ENCODE measurements at regions of chr5 and their contacts with region 1.

Region 1: DNA sequence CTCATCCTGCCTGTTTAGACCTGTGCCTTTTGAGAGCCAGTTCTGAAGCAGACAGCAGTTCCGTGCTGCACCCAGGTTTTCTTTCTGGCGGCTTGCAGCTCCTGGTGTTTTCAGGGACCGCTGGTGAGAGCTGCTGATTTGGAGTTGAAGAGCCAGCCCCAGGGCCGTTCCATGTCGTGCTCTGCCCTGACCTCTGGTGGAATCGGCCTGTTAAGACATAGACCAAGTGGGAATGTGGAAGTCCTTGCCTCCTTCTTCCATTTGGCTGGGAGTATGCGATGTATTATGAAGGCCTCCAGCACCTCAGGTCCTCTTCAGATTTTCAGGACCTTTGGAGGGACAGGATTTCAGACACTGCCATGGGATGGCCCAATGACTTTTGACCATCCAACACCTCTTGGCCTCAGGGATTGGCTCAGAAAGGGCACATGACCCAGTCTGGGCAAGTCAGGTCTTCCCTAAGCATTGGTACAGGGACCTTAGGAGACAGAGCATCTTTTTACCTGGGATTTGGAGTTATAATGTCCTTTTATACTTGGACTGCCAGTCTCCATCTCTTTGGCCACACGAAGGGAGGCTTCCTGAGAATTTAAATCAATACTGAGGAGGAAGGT is 136.1 kb upstream of the CLINT1 start:
- DNase-seq: peak; percentile 75 to 80
- H3K4me3 ChIP-seq: no peak overlapping the region
- H3K4me3 Mint-ChIP-seq: peak overlapping the region; percentile 49
- H3K27ac Mint-ChIP-seq: no peak overlapping the region
- H3K4me1 ChIP-seq: no peaks in the 10 kb centered on the region
- H3K4me1 Mint-ChIP-seq: no peaks in the 10 kb centered on the region
- H3K27me3 ChIP-seq: no peaks in the 10 kb centered on the region
- H3K27me3 Mint-ChIP-seq: no peaks in the 10 kb centered on the region
- CTCF ChIP-seq: peak; percentile 75 to 93

Region 2: GRCh38 chr5:157761690-157762621 is 233.1 kb before region 1 on chr5:
- CTCF ChIA-PET with region 1: interaction called, 3 read pairs
- POLR2A ChIA-PET with region 1: no interaction called
- intact Hi-C with region 1: loop called (anchors 1 kb)
- DNase-seq: peak; percentile 44 to 53
- H3K4me3 ChIP-seq: no peak overlapping the region
- H3K4me3 Mint-ChIP-seq: no peak overlapping the region
- H3K27ac Mint-ChIP-seq: no peak overlapping the region
- H3K4me1 ChIP-seq: no peaks in the 10 kb centered on the region
- H3K4me1 Mint-ChIP-seq: no peaks in the 10 kb centered on the region
- H3K27me3 ChIP-seq: no peaks in the 10 kb centered on the region
- H3K27me3 Mint-ChIP-seq: no peaks in the 10 kb centered on the region
- CTCF ChIP-seq: peak; percentile 70 to 80

Region 3: GRCh38 chr5:157820593-157821252 is 174.3 kb before region 1 on chr5:
- CTCF ChIA-PET with region 1: interaction called, 4 read pairs
- POLR2A ChIA-PET with region 1: no interaction called
- intact Hi-C with region 1: loop called (anchors 1 kb)
- DNase-seq: peak in 1 of 2 experiments; percentile 54
- H3K4me3 ChIP-seq: no peak overlapping the region
- H3K4me3 Mint-ChIP-seq: no peak overlapping the region
- H3K27ac Mint-ChIP-seq: peak overlapping the region; percentile 25
- H3K4me1 ChIP-seq: peaks cover 24% of the 10 kb centered on the region
- H3K4me1 Mint-ChIP-seq: peaks cover 17% of the 10 kb centered on the region
- H3K27me3 ChIP-seq: no peaks in the 10 kb centered on the region
- H3K27me3 Mint-ChIP-seq: no peaks in the 10 kb centered on the region
- CTCF ChIP-seq: peak; percentile 54 to 56

Region 4: DNA sequence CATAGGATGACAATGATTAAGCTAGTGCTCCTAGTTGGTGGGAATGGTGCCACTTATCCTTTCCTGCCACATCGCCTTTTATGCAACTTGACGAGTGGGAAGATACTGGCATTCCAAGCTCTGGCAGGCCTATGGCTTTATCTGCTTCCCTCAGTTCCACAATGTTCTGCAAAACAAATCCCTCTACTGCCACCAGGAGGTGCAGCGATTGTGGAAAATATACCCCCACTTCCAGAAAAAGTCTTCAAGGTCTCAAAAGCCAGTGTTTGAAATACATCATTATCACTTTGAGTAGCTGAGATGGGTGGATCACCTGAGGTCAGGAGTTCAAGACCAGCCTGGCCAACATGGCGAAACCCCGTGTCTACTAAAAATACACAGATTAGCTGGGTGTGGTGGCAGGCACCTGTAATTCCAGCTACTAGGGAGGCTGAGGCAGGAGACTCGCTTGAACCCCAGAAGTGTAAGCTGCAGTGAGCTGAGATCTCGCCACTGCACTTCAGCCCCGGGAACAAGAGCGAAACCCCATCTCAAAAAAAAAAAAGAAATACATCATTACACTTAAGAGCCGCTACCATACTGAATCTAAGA is 139.5 kb before region 1 on chr5:
- CTCF ChIA-PET with region 1: interaction called, 8 read pairs
- POLR2A ChIA-PET with region 1: no interaction called
- intact Hi-C with region 1: loop called (anchors 1 kb)
- DNase-seq: peak; percentile 63 to 73
- H3K4me3 ChIP-seq: no peak overlapping the region
- H3K4me3 Mint-ChIP-seq: no peak overlapping the region
- H3K27ac Mint-ChIP-seq: no peak overlapping the region
- H3K4me1 ChIP-seq: peaks cover 9% of the 10 kb centered on the region
- H3K4me1 Mint-ChIP-seq: peaks cover 6% of the 10 kb centered on the region
- H3K27me3 ChIP-seq: no peaks in the 10 kb centered on the region
- H3K27me3 Mint-ChIP-seq: no peaks in the 10 kb centered on the region
- CTCF ChIP-seq: peak; percentile 65 to 68

Region 5: GRCh38 chr5:157917899-157918809 is 76.9 kb before region 1 on chr5:
- CTCF ChIA-PET with region 1: no interaction called
- POLR2A ChIA-PET with region 1: no interaction called
- intact Hi-C with region 1: loop called (anchors 2 kb)
- DNase-seq: peak; percentile 78 to 80
- H3K4me3 ChIP-seq: no peak overlapping the region
- H3K4me3 Mint-ChIP-seq: peak overlapping the region; percentile 67
- H3K27ac Mint-ChIP-seq: peak overlapping the region; percentile 71
- H3K4me1 ChIP-seq: peaks cover 24% of the 10 kb centered on the region
- H3K4me1 Mint-ChIP-seq: peaks cover 22% of the 10 kb centered on the region
- H3K27me3 ChIP-seq: no peaks in the 10 kb centered on the region
- H3K27me3 Mint-ChIP-seq: no peaks in the 10 kb centered on the region
- CTCF ChIP-seq: peak; percentile 67 to 71